Activated naive CD8-positive, alpha-beta T cell treated with anti-CD3 and anti-CD28 coated beads, Interleukin-2, amount 10 ng/mL, durations not matched to agents 7 days and 5 days (primary cell): ENCODE measurements at regions of chr22 and their contacts with region 1.

Region 1: DNA sequence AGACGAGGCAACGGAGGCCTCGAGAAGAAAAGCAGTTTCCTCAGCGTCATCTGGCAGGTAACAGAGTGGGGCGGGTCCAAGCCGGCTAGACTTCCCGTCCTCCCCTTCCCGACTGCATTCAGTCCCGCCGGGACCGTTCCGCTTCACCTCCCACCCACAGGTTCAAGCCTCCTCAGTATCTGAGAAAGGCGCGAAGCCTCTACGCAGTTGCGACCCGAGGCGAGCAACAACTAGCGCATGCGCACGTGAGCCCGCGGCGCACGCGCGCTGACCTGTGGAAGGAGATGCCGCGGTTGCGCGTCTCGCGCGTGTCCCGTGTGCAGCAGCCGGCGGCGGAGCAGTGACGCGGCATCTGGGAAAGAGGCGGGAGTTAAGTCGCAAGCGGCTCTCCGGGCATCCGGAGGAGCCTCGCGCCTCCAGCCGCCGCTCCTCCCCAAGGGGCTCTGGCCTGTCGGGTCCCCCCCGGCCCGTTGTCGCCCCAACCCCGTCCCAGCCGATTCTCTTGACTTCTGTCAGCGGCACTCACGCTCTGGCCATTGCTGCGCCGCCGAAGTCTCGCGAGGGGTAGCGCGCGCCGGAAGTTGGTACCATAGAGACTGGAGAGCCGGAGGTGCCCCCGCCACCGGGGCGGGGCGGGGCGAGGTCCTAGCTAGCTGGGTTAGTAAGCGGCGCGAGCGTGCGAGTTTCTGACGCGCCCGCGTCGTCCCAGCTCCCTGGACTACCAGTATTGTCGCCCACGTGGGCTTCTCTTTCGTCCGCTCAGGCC is at the start of gene THAP7:
- DNase-seq: peak; percentile 98
- ATAC-seq: peak; percentile 90
- H3K4me3 Mint-ChIP-seq: peak within 1 kb of the TSS; percentile 96
- H3K27ac Mint-ChIP-seq: peak within 1 kb of the TSS; percentile 99
- H3K4me1 Mint-ChIP-seq: peaks cover 18% of the 10 kb centered on the region
- H3K27me3 Mint-ChIP-seq: no peaks in the 10 kb centered on the region
- total RNA-seq, gene THAP7: 33.6 to 33.8 TPM

Region 2: DNA sequence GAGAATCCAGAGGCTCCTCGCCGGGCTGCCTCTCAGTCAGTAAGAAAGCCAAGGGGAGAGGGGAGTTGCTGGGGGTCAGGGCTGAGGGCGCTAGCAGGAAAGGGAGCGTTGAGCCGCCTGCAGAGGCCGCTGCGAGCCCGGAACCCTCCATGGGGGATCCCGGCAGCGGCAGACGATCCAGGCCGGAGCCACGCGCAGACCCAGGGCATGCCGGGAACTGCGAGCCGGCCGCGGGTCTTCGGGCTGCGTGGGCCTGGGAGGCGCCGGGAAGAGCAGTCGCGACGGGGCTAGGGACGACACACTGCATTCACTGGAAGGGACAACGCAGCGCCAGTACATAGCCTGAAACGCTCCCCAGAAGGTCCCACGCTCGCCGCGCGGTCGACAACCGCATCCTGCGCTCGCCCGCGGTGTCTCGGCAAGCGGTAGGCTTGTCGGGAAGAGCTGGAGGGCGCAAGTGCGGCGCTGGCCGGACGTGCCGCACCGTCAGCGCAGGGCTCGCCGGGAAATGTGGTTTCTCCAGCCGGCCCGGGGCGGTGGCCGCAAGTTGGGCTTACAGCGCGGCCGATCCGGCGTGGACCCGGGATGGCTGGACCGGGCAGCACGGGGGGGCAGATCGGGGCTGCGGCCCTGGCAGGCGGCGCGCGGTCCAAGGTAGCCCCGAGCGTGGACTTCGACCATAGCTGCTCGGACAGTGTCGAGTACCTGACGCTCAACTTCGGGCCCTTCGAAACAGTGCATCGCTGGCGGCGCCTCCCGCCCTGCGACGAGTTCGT is 19.8 kb before region 1 on chr22 and contains the start of gene LZTR1:
- POLR2A ChIA-PET with region 1: interaction called, 23 read pairs
- DNase-seq: peak; percentile 87
- ATAC-seq: peak; percentile 79
- H3K4me3 Mint-ChIP-seq: peak within 1 kb of the TSS; percentile 99
- H3K27ac Mint-ChIP-seq: peak within 1 kb of the TSS; percentile 89
- H3K4me1 Mint-ChIP-seq: peaks cover 30% of the 10 kb centered on the region
- H3K27me3 Mint-ChIP-seq: no peaks in the 10 kb centered on the region
- total RNA-seq, gene LZTR1: 80.1 to 80.9 TPM

Region 3: GRCh38 chr22:21014202-21014725 is 12.5 kb after region 1 on chr22:
- POLR2A ChIA-PET with region 1: interaction called, 16 read pairs
- DNase-seq: peak; percentile 87
- ATAC-seq: peak; percentile 90
- H3K4me3 Mint-ChIP-seq: peak overlapping the region; percentile 83
- H3K27ac Mint-ChIP-seq: peak overlapping the region; percentile 66
- H3K4me1 Mint-ChIP-seq: peaks cover 11% of the 10 kb centered on the region
- H3K27me3 Mint-ChIP-seq: peaks cover 3% of the 10 kb centered on the region